Aorta (tissue), 5 donors: ENCODE measurements at regions of chr3 and their contacts with region 1.

Region 1: GRCh38 chr3:112734718-112735350 is 93.9 kb upstream of the CCDC80 start:
- DNase-seq: peak in 1 of 2 donors; percentile 51
- ATAC-seq: peak; percentile 69
- H3K4me3 ChIP-seq: no peak overlapping the region
- H3K27ac ChIP-seq: no peak overlapping the region
- H3K4me1 ChIP-seq: no peaks in the 10 kb centered on the region
- H3K27me3 ChIP-seq: no peaks in the 10 kb centered on the region

Region 2: GRCh38 chr3:112629425-112629824 is 105.4 kb before region 1 on chr3:
- intact Hi-C with region 1: no loop called
- DNase-seq: peak in 1 of 2 donors; percentile 71
- ATAC-seq: peak; percentile 84
- H3K4me3 ChIP-seq: no peak overlapping the region
- H3K27ac ChIP-seq: no peak overlapping the region
- H3K4me1 ChIP-seq: peaks cover 0 to 5% of the 10 kb centered on the region in 2 donors
- H3K27me3 ChIP-seq: no peaks in the 10 kb centered on the region

Region 3: GRCh38 chr3:112814266-112814665 is 79.4 kb after region 1 on chr3:
- intact Hi-C with region 1: loop called in 1 of 2 experiments (anchors 5 kb)
- DNase-seq: no peak
- ATAC-seq: peak; percentile 63
- H3K4me3 ChIP-seq: no peak overlapping the region
- H3K27ac ChIP-seq: no peak overlapping the region
- H3K4me1 ChIP-seq: peaks cover 3 to 5% of the 10 kb centered on the region in 2 donors
- H3K27me3 ChIP-seq: no peaks in the 10 kb centered on the region

Region 4: GRCh38 chr3:112979240-112979832 is 244.5 kb after region 1 on chr3:
- intact Hi-C with region 1: loop called in 1 of 2 experiments (anchors 5 kb)
- DNase-seq: no peak
- ATAC-seq: no peak
- H3K4me3 ChIP-seq: no peak overlapping the region
- H3K27ac ChIP-seq: no peak overlapping the region
- H3K4me1 ChIP-seq: no peaks in the 10 kb centered on the region
- H3K27me3 ChIP-seq: no peaks in the 10 kb centered on the region